Naive thymus-derived CD4-positive, alpha-beta T cell (primary cell): ENCODE measurements at regions of chr2 and their contacts with region 1.

Region 1: DNA sequence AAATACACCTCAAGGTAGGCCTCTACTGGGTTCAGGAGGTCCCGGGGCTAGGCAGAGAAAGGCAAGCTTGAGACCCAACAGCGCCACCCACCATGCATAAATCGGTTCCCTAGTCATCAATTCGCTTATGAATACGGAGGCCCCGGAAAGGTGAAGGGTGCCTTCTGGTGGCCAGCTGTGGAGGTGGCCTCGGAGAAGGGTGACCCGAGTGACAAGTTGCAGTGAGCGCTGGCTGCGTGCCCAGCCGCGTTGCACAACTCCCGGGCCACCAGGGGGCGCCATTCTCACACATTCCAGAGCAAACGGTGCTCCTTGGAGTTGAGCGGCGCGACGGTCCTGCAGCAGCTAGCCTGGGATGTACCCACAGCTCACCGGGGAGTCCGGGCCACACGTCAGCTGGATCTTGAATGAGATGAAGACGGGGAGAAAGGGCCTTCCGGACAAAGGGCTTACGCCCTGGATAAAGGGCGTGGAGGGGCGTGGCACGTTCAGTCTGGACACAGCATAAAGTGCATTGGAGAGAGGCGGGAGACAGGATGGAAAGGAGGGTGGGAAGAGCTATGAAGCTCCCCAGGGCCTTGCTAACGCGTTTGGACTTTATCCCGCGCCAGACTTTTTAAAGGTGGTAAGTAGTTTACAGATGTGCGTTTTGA is 20.4 kb downstream of the TMSB10 start:
- DNase-seq: peak; percentile 94 to 99 (median 97)
- ATAC-seq: peak; percentile 90
- H3K4me3 ChIP-seq: peak overlapping the region; percentile 77
- H3K4me3 Mint-ChIP-seq: peak overlapping the region; percentile 91 to 100 (median 94)
- H3K27ac ChIP-seq: peak overlapping the region; percentile 69
- H3K27ac Mint-ChIP-seq: peak overlapping the region; percentile 91 to 100 (median 96)
- H3K4me1 ChIP-seq: peaks cover 23 to 29% of the 10 kb centered on the region in 2 donors
- H3K4me1 Mint-ChIP-seq: peaks cover 25 to 55% (median 47%) of the 10 kb centered on the region in 7 donors
- H3K27me3 ChIP-seq: no peaks in the 10 kb centered on the region
- H3K27me3 Mint-ChIP-seq: no peaks in the 10 kb centered on the region

Region 2: DNA sequence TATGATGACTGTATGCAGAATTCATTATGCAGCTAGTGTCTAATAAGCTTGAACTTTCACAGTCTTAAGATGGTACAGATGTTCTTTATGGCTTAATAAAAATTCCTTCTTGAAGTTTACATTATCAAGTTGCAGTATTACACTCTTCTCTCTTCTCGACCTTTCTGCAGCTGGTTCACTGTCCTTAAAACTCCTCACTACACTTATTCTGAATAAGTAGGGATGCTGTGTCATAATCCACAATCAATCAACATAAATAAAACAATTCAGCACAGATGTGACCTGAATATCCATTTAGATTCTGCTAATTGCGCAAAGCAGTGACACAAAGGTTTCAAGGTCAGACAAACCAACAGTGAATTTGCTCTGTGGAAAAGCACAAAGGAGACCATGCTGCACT is 823.6 kb before region 1 on chr2:
- CTCF ChIA-PET with region 1: no interaction called
- POLR2A ChIA-PET with region 1: no interaction called
- intact Hi-C with region 1: no loop called
- DNase-seq: no peak
- ATAC-seq: no peak
- H3K4me3 ChIP-seq: no peak overlapping the region
- H3K4me3 Mint-ChIP-seq: no peak overlapping the region
- H3K27ac ChIP-seq: no peak overlapping the region
- H3K27ac Mint-ChIP-seq: no peak overlapping the region
- H3K4me1 ChIP-seq: no peaks in the 10 kb centered on the region
- H3K4me1 Mint-ChIP-seq: no peaks in the 10 kb centered on the region
- H3K27me3 ChIP-seq: no peaks in the 10 kb centered on the region
- H3K27me3 Mint-ChIP-seq: peaks cover 0 to 27% (median 15%) of the 10 kb centered on the region in 5 donors

Region 3: DNA sequence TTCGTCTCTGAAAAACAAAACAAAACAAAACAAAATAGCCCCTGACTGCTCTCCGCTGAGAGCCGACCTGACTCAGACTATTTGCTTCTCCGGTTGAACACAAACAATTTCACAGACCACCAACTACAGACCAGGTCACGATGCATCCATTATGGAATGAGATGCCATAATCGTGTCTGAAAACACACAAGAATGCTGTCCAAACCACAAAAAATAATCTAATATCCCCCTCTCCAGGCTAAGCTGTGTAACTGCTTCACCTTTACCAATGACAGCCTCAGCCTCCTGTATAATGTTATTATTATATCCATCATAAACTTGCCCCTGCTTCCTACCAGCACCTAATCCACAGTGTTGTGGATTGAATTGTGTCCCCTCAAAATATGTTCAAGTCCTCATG is 294.8 kb before region 1 on chr2:
- CTCF ChIA-PET with region 1: interaction called, 7 read pairs
- POLR2A ChIA-PET with region 1: no interaction called
- intact Hi-C with region 1: loop called (anchors 1 to 5 kb)
- DNase-seq: peak in 6 of 9 donors; percentile 21 to 57 (median 50)
- ATAC-seq: peak; percentile 69
- H3K4me3 ChIP-seq: no peak overlapping the region
- H3K4me3 Mint-ChIP-seq: peak overlapping the region in 4 of 10 donors; percentile 5 to 60 (median 34)
- H3K27ac ChIP-seq: no peak overlapping the region
- H3K27ac Mint-ChIP-seq: peak overlapping the region in 5 of 9 donors; percentile 12 to 80 (median 33)
- H3K4me1 ChIP-seq: peaks cover 0 to 15% of the 10 kb centered on the region in 2 donors
- H3K4me1 Mint-ChIP-seq: peaks cover 16 to 56% (median 52%) of the 10 kb centered on the region in 7 donors
- H3K27me3 ChIP-seq: no peaks in the 10 kb centered on the region
- H3K27me3 Mint-ChIP-seq: peaks cover 0 to 2% (median 0%) of the 10 kb centered on the region in 5 donors

Region 4: DNA sequence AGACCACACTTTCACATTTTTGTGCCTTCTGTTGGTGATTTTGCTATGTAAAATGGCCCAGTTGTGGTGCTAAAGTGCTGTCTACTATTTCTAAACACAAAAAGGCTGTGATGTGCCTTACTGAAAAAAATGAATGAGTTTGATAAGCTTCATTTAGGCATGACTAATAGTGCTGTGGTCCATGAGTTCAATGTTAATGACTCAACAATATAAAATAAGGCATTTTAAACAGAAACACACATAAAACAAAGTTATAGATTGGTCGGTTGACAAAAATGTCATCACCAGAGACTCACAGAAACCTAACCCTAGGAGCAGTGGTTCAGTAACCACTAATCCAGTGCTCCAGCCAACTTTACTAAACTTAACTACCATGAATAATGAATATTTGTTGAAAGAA is 249.6 kb before region 1 on chr2:
- CTCF ChIA-PET with region 1: no interaction called
- POLR2A ChIA-PET with region 1: no interaction called
- intact Hi-C with region 1: no loop called
- DNase-seq: no peak
- ATAC-seq: no peak
- H3K4me3 ChIP-seq: no peak overlapping the region
- H3K4me3 Mint-ChIP-seq: no peak overlapping the region
- H3K27ac ChIP-seq: no peak overlapping the region
- H3K27ac Mint-ChIP-seq: no peak overlapping the region
- H3K4me1 ChIP-seq: peaks cover 0 to 16% of the 10 kb centered on the region in 2 donors
- H3K4me1 Mint-ChIP-seq: peaks cover 4 to 58% (median 37%) of the 10 kb centered on the region in 7 donors
- H3K27me3 ChIP-seq: no peaks in the 10 kb centered on the region
- H3K27me3 Mint-ChIP-seq: no peaks in the 10 kb centered on the region

Region 5: GRCh38 chr2:84832772-84833461 is 92.9 kb before region 1 on chr2:
- CTCF ChIA-PET with region 1: interaction called, 10 read pairs
- POLR2A ChIA-PET with region 1: interaction called, 7 read pairs
- intact Hi-C with region 1: no loop called
- DNase-seq: no peak
- ATAC-seq: peak; percentile 64
- H3K4me3 ChIP-seq: peak overlapping the region; percentile 50
- H3K4me3 Mint-ChIP-seq: peak overlapping the region in 7 of 10 donors; percentile 74 to 89 (median 79)
- H3K27ac ChIP-seq: peak overlapping the region; percentile 79
- H3K27ac Mint-ChIP-seq: peak overlapping the region in 1 of 9 donors; percentile 92
- H3K4me1 ChIP-seq: peaks cover 36 to 93% of the 10 kb centered on the region in 2 donors
- H3K4me1 Mint-ChIP-seq: peaks cover 18 to 46% (median 26%) of the 10 kb centered on the region in 7 donors
- H3K27me3 ChIP-seq: no peaks in the 10 kb centered on the region
- H3K27me3 Mint-ChIP-seq: no peaks in the 10 kb centered on the region

Region 6: DNA sequence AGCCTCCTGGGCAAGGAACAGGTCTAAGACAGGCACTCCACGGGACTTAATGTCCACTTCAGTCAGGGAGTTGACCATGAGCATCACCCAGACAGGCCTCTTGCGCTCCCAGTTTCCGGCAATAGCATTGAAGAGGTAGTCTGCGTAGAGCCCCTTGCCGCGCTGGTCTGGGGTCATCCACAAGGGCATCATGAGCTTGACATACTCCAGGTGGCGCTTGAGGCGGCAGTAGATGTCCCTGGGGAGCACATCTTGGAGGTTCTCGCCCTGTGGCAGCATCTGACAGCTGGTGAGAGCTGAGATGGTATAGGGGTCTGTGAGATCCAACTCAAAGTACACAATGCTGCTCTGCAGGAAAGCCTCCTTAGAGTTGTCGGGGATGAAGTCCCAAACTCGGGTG is 55.5 kb before region 1 on chr2:
- CTCF ChIA-PET with region 1: interaction called, 24 read pairs
- POLR2A ChIA-PET with region 1: interaction called, 193 read pairs
- intact Hi-C with region 1: loop called (anchors 1 kb)
- DNase-seq: no peak
- ATAC-seq: no peak
- H3K4me3 ChIP-seq: no peak overlapping the region
- H3K4me3 Mint-ChIP-seq: peak overlapping the region; percentile 15 to 89 (median 68)
- H3K27ac ChIP-seq: peak overlapping the region; percentile 24
- H3K27ac Mint-ChIP-seq: peak overlapping the region in 8 of 9 donors; percentile 33 to 98 (median 92)
- H3K4me1 ChIP-seq: peaks cover 2 to 75% of the 10 kb centered on the region in 2 donors
- H3K4me1 Mint-ChIP-seq: peaks cover 34 to 97% (median 87%) of the 10 kb centered on the region in 7 donors
- H3K27me3 ChIP-seq: no peaks in the 10 kb centered on the region
- H3K27me3 Mint-ChIP-seq: no peaks in the 10 kb centered on the region

Region 7: DNA sequence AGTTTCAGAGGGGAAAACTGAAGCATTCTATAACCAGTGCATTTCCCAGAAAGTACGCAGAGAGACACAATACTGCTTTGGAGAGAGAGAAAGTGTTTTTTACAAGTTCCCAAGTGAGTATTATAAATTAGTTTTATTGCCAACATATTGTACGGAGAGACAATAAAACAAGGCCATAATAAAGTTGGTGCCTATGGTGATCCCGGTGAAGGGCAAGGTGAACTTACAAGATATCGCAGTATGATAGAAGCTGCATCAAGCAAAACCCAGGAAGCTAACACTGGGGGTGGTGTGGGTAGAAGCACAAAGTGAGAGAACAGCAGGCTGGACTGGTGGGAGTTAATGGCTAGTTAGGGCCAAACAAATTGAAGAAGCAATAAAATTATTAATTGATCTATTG is 12.9 kb before region 1 on chr2:
- CTCF ChIA-PET with region 1: interaction called, 87 read pairs
- POLR2A ChIA-PET with region 1: interaction called, 495 read pairs
- intact Hi-C with region 1: no loop called
- DNase-seq: peak in 1 of 9 donors; percentile 16
- ATAC-seq: no peak
- H3K4me3 ChIP-seq: no peak overlapping the region
- H3K4me3 Mint-ChIP-seq: no peak overlapping the region
- H3K27ac ChIP-seq: no peak overlapping the region
- H3K27ac Mint-ChIP-seq: peak overlapping the region in 1 of 9 donors; percentile 3
- H3K4me1 ChIP-seq: peaks cover 12 to 21% of the 10 kb centered on the region in 2 donors
- H3K4me1 Mint-ChIP-seq: peaks cover 23 to 63% (median 39%) of the 10 kb centered on the region in 7 donors
- H3K27me3 ChIP-seq: peaks cover 0 to 3% of the 10 kb centered on the region in 2 donors
- H3K27me3 Mint-ChIP-seq: no peaks in the 10 kb centered on the region

Region 8: GRCh38 chr2:85017411-85018048 is 91.7 kb after region 1 on chr2:
- CTCF ChIA-PET with region 1: interaction called, 49 read pairs
- POLR2A ChIA-PET with region 1: interaction called, 12 read pairs
- intact Hi-C with region 1: loop called (anchors 1 kb)
- DNase-seq: peak in 4 of 9 donors; percentile 17 to 30 (median 24)
- ATAC-seq: no peak
- H3K4me3 ChIP-seq: no peak overlapping the region
- H3K4me3 Mint-ChIP-seq: peak overlapping the region in 4 of 10 donors; percentile 5 to 39 (median 32)
- H3K27ac ChIP-seq: no peak overlapping the region
- H3K27ac Mint-ChIP-seq: peak overlapping the region in 8 of 9 donors; percentile 8 to 67 (median 38)
- H3K4me1 ChIP-seq: peaks cover 2 to 15% of the 10 kb centered on the region in 2 donors
- H3K4me1 Mint-ChIP-seq: peaks cover 41 to 78% (median 66%) of the 10 kb centered on the region in 7 donors
- H3K27me3 ChIP-seq: no peaks in the 10 kb centered on the region
- H3K27me3 Mint-ChIP-seq: no peaks in the 10 kb centered on the region

Region 9: DNA sequence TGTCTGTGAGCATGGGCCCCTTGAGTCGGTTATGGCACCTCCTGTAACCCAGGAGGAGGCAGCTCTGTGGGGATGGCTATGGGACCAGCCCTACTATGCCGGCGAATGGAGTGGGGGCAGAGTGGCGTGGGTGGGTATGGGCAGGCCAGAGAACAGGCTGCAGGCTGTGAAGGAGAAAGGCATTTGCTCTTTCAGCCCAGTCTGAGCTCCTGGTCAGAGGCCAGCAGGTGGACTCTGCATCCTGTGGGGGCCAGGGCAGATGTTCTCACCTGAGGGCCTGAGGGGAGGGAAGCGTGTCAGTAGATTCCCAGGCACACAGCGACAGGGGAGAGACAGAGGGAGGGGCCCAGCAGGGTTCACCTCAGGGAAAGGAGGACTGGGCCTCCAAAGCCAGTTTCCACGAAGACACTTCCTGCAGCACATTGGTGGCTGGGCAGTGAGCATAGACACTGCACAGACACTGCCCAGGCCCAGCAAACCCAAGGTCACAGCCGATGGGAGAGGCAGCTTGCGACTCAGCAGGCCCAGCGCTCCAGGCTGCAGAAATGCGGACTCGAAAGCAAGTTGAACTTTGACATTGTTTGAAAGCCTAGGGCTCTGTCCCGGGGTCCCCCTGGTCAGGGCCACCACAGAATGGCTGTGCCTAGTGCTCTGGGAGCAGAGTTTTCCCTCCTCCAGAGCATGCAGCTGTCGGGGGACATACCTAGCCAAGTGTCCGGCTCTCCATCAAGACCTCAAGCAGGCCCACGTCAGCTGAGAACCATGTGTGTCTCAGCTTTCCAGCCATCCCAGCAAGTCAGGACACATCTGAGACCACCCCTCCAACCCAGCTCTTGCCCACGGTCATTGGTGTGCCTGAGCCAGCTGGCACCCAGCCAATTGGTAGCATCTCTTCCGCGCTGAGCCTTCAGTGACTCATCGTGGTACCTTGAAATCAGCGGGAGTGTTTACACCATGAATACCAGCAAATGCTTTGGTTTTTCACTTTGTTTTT is 348.2 kb after region 1 on chr2:
- CTCF ChIA-PET with region 1: no interaction called
- POLR2A ChIA-PET with region 1: no interaction called
- intact Hi-C with region 1: no loop called
- DNase-seq: no peak
- ATAC-seq: no peak
- H3K4me3 ChIP-seq: no peak overlapping the region
- H3K4me3 Mint-ChIP-seq: no peak overlapping the region
- H3K27ac ChIP-seq: no peak overlapping the region
- H3K27ac Mint-ChIP-seq: no peak overlapping the region
- H3K4me1 ChIP-seq: no peaks in the 10 kb centered on the region
- H3K4me1 Mint-ChIP-seq: no peaks in the 10 kb centered on the region
- H3K27me3 ChIP-seq: no peaks in the 10 kb centered on the region
- H3K27me3 Mint-ChIP-seq: peaks cover 0 to 21% (median 6%) of the 10 kb centered on the region in 5 donors